ENCODE measurements at regions of chr1 and their contacts with region 1.

Region 1: DNA sequence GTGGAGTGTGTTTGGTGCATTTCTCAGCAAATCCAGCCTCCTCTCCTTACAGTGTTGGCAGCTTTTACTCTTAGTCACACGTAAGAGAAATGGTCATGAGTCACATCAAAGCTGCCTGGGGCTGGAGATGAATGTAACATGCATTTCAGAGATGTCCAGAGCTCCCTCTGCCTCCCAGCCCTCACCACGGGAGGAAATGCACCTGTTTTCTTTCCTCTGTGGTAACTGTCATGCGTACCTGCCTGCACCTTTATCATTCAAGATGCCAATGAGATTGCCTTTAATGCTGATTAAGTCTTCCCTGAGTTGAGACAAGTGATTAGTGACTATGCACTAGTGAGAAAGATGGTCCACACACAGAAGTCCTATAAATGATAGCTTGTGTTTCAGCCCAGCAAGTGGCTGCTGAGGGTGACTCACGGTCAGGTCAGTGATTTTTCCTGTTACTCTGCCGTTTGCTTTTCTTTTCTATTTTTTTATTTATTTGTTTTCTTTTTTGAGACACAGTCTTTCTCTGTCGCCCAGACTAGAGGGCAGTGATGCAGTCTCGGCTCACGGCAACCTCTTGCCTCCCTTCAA is 277.3 kb upstream of the FMN2 start:
- DNase-seq: peak; percentile 99
- ATAC-seq: peak; percentile 80
- H3K4me3 ChIP-seq: peak overlapping the region; percentile 56
- H3K27ac ChIP-seq: peak overlapping the region; percentile 90
- H3K4me1 ChIP-seq: peaks cover 46% of the 10 kb centered on the region
- H3K27me3 ChIP-seq: no peaks in the 10 kb centered on the region
- CTCF ChIP-seq: peak; percentile 49

Region 2: GRCh38 chr1:239250353-239251035 is 563.9 kb before region 1 on chr1:
- CTCF ChIA-PET with region 1: no interaction called
- POLR2A ChIA-PET with region 1: no interaction called
- intact Hi-C with region 1: loop called (anchors 5 kb)
- DNase-seq: peak; percentile 98
- ATAC-seq: peak; percentile 97
- H3K4me3 ChIP-seq: no peak overlapping the region
- H3K27ac ChIP-seq: peak overlapping the region; percentile 92
- H3K4me1 ChIP-seq: peaks cover 40% of the 10 kb centered on the region
- H3K27me3 ChIP-seq: no peaks in the 10 kb centered on the region
- CTCF ChIP-seq: no peak

Region 3: DNA sequence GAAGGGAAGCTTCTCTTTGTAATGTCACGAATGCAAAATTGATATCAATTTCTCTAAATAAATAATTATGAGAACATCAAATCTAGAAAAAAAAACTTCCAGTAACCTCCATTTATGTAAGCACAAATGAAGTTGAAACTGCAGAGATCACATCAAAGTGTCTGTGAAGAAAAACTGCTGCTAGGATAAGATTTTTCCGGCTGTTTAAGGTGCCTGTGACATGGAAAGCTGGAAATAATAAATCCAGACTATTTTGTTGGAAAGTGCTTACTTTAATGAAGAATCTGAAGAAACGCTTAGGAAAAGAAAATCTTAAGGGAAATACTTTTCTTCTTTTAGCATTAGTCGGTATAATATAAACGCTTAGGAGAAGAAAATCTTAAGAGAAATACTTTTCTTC is 371.0 kb before region 1 on chr1:
- CTCF ChIA-PET with region 1: interaction called, 11 read pairs
- POLR2A ChIA-PET with region 1: no interaction called
- intact Hi-C with region 1: loop called (anchors 10 kb)
- DNase-seq: no peak
- ATAC-seq: no peak
- H3K4me3 ChIP-seq: no peak overlapping the region
- H3K27ac ChIP-seq: peak overlapping the region; percentile 27
- H3K4me1 ChIP-seq: peaks cover 27% of the 10 kb centered on the region
- H3K27me3 ChIP-seq: no peaks in the 10 kb centered on the region
- CTCF ChIP-seq: no peak

Region 4: DNA sequence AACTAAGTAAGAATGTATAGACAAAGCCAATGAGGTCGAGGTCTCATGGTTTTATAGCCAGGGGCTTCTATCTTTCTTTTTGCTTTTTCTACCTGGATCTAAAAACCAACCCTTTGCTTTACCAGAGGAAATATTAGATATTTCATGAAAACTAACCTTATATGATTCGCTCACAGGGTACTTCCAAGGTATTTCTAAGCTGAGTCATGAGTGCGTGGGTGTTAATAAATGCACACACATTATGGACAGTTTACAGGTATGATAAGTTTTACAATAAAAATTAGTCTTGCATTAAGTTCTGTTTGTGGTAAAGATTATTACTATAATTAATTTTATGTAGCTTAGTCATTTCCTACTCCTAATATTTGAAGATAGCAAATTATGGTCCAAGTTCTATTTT is 210.9 kb before region 1 on chr1:
- CTCF ChIA-PET with region 1: no interaction called
- POLR2A ChIA-PET with region 1: no interaction called
- intact Hi-C with region 1: loop called (anchors 5 kb)
- DNase-seq: peak; percentile 68
- ATAC-seq: peak; percentile 53
- H3K4me3 ChIP-seq: no peak overlapping the region
- H3K27ac ChIP-seq: peak overlapping the region; percentile 45
- H3K4me1 ChIP-seq: peaks cover 51% of the 10 kb centered on the region
- H3K27me3 ChIP-seq: no peaks in the 10 kb centered on the region
- CTCF ChIP-seq: no peak

Region 5: GRCh38 chr1:239700667-239701066 is 113.7 kb before region 1 on chr1:
- CTCF ChIA-PET with region 1: no interaction called
- POLR2A ChIA-PET with region 1: no interaction called
- intact Hi-C with region 1: no loop called
- DNase-seq: no peak
- ATAC-seq: no peak
- H3K4me3 ChIP-seq: no peak overlapping the region
- H3K27ac ChIP-seq: no peak overlapping the region
- H3K4me1 ChIP-seq: no peaks in the 10 kb centered on the region
- H3K27me3 ChIP-seq: no peaks in the 10 kb centered on the region
- CTCF ChIP-seq: no peak

Region 6: DNA sequence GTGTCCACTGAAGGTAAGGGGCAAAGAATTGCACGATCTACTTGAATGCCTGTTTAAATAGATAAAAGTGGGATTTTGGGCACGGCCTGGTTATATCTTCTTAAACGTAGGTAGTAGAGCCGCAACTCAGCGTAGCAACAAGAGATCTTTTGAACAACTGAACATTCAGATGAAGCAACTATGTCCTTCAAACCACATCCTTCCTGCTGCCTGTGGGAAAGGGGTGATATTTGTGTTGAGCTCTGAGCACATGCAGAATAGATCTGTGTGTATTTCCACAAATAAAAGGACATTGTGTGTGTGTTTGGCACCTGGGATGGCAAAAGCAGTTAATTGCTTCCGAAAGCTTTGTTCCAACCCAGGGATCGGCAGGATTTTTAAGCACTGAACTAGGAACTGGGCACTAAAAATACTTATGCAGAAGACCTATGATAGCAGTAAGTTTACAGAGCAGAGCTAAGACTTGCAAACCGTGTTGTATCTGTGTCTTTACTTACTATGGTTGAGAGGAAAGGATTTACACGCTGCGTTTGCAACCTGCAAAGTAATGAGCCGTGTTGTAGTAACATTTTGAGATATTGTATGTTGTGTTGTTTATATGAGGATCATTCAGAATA is 94.6 kb before region 1 on chr1:
- CTCF ChIA-PET with region 1: interaction called, 3 read pairs
- POLR2A ChIA-PET with region 1: no interaction called
- intact Hi-C with region 1: loop called (anchors 5 kb)
- DNase-seq: no peak
- ATAC-seq: no peak
- H3K4me3 ChIP-seq: no peak overlapping the region
- H3K27ac ChIP-seq: no peak overlapping the region
- H3K4me1 ChIP-seq: peaks cover 18% of the 10 kb centered on the region
- H3K27me3 ChIP-seq: no peaks in the 10 kb centered on the region
- CTCF ChIP-seq: no peak

Region 7: DNA sequence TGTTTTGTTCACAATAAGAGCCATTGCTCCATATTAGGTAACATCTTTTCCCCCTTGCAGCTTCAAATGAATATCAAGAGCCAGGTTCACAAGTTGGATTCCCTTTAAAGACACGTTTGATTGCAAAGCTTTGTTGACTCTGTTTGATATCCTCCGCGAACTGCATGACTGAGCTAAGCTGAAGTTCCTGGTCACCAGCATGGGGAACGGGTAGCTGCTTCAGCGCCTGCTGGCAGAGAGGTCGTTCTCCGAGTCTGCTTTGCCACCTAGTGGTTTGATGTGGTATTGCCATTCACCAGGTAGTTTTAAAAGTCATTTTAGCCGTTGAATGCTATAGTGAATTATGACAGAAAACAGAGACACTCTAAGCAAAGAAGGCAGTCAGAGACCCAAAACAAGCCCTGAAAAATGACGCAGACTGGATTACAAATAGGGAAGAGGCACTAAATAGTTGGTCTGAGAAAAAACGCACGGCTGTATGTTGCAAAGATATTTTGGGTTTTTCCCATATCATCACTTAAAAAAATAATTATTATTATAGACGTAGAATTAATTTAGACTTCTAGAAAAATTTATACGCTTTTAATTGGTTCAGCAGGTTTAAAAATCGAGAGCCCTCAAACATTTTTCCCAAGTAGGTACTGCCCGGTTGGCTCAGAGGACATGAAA is 83.8 kb after region 1 on chr1:
- CTCF ChIA-PET with region 1: interaction called, 9 read pairs
- POLR2A ChIA-PET with region 1: no interaction called
- intact Hi-C with region 1: loop called (anchors 1 kb)
- DNase-seq: peak; percentile 94
- ATAC-seq: peak; percentile 84
- H3K4me3 ChIP-seq: no peak overlapping the region
- H3K27ac ChIP-seq: no peak overlapping the region
- H3K4me1 ChIP-seq: peaks cover 15% of the 10 kb centered on the region
- H3K27me3 ChIP-seq: no peaks in the 10 kb centered on the region
- CTCF ChIP-seq: peak; percentile 99

Measured in PC-3 (cell line).